Posterior cingulate gyrus (tissue), 11 donors: ENCODE measurements at regions of chr9 and their contacts with region 1.

Region 1: GRCh38 chr9:38068866-38069629 is at the start of gene SHB:
- DNase-seq: peak; percentile 67 to 97 (median 73)

Region 2: DNA sequence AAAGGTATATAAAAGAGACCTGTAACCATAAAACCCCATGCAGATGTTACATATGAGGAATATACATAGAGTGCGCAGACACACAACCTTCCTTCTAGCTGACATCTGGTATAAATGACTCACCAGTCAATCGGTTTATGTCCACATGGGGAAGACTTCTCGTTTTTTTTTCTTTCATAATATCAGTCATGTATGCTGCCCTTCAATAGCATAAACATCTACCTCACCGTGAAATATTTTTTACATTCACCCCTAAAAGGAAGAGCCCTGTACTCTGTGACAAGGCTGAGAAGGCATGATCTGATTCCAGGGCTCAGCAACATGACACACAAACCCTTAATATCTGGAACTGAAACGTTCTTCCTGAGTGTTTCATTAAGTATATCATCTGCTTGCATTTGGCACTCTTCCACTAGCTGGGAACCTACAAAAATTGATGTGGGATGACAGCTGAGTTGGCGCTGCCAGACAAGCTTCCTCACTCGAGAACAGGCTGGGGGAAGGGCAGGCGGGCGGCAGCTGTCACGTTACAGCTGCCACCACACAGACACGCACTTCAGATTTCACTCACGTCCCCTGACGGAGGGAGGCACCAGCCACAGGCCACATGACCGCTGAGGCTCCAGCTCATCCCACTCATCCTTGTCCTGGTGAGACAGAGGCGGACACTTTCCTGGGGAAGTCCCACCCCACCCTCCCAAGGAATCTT is 74.3 kb before region 1 on chr9:
- intact Hi-C with region 1: loop called (anchors 2 kb)
- DNase-seq: peak; percentile 83 to 99 (median 93)

Region 3: DNA sequence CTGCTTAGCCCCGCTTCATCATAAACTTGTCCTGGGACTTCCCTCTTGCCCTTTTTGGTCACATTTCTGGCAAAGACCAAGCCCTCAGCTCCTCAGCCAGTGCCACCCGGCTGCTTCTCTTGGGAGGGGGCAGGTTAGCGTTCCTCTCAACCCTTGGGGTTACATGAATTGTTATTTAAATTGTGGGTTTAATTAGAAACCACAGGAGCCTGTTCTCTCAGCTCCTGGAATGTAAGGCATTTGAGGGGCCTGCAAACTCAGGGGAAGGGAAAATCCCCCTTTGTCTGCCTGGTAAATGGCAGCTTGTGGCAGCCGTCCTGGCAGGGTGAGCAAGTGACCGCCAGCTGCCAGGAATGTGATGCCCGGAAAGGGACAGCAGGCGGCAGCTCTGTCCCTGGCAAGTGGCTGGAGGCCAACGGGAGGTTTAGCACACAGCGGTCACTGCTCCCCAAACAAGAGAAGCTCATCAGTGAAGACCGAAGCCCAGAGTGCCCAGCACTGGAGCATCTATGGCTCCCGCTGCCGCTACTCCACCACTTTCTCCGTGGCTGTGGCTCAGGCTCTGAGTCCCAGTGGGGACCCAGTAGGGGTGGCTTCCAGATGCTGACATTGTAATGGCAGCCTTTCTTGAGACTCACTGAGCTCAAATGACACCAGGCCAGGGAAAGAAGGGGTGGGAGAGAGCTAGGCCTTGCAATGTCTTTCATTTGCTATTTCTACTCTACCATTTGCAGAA is 51.7 kb before region 1 on chr9:
- intact Hi-C with region 1: loop called (anchors 1 kb)
- DNase-seq: peak; percentile 73 to 98 (median 83)